T-cell (primary cell): ENCODE measurements at regions of chr6 and their contacts with region 1.

Region 1: GRCh38 chr6:25490018-25490801 is 161.8 kb upstream of the SCGN start:
- DNase-seq: peak; percentile 27 to 81 (median 56)
- ATAC-seq: peak; percentile 69 to 83 (median 79)
- H3K4me3 ChIP-seq: no peak overlapping the region
- H3K4me3 Mint-ChIP-seq: no peak overlapping the region
- H3K27ac ChIP-seq: no peak overlapping the region
- H3K27ac Mint-ChIP-seq: peak overlapping the region; percentile 47 to 78
- H3K4me1 ChIP-seq: peaks cover 0 to 6% of the 10 kb centered on the region in 2 experiments
- H3K4me1 Mint-ChIP-seq: peaks cover 6 to 9% (median 7%) of the 10 kb centered on the region in 3 donors
- H3K27me3 ChIP-seq: no peaks in the 10 kb centered on the region
- H3K27me3 Mint-ChIP-seq: no peaks in the 10 kb centered on the region

Region 2: DNA sequence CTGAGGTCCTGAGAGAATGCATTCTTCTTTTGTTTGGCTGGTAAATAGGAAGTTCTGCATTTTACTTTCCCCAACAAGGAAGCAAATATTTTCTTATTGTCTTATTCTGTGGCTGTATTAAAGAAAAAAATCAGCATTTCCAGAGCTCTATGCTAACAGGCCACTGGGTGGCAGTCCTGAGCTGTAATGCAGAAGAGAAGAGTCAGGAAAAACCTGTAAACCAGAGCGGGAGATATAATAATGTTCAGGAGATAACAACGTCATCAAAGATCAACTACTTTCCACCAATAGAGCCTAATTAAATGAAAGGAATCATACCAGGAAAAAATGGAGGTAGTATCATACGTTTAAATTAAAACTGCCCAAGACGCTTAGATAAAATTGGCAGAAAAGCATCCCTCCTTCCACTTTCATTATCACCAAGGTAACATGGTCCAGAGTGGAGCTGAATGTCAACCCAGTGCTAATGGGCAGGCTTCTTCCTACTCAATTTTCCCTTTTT is 266.7 kb before region 1 on chr6:
- CTCF ChIA-PET with region 1: interaction called, 9 to 46 read pairs
- POLR2A ChIA-PET with region 1: no interaction called
- DNase-seq: peak in 34 of 35 experiments; percentile 4 to 82 (median 53)
- ATAC-seq: peak; percentile 42 to 71 (median 54)
- H3K4me3 ChIP-seq: peak overlapping the region in 1 of 2 donors; percentile 13
- H3K4me3 Mint-ChIP-seq: peak overlapping the region; percentile 28 to 65 (median 62)
- H3K27ac ChIP-seq: no peak overlapping the region
- H3K27ac Mint-ChIP-seq: no peak overlapping the region
- H3K4me1 ChIP-seq: peaks cover 3% of the 10 kb centered on the region in 2 experiments
- H3K4me1 Mint-ChIP-seq: peaks cover 7 to 12% (median 9%) of the 10 kb centered on the region in 3 donors
- H3K27me3 ChIP-seq: no peaks in the 10 kb centered on the region
- H3K27me3 Mint-ChIP-seq: peaks cover 7 to 11% of the 10 kb centered on the region in 2 donors

Region 3: GRCh38 chr6:25263657-25264056 is 226.6 kb before region 1 on chr6:
- CTCF ChIA-PET with region 1: interaction called, 33 to 112 read pairs
- POLR2A ChIA-PET with region 1: interaction called, 3 to 4 read pairs
- DNase-seq: no peak
- ATAC-seq: no peak
- H3K4me3 ChIP-seq: no peak overlapping the region
- H3K4me3 Mint-ChIP-seq: no peak overlapping the region
- H3K27ac ChIP-seq: no peak overlapping the region
- H3K27ac Mint-ChIP-seq: no peak overlapping the region
- H3K4me1 ChIP-seq: peaks cover 0 to 3% of the 10 kb centered on the region in 2 experiments
- H3K4me1 Mint-ChIP-seq: peaks cover 2 to 6% (median 2%) of the 10 kb centered on the region in 3 donors
- H3K27me3 ChIP-seq: no peaks in the 10 kb centered on the region
- H3K27me3 Mint-ChIP-seq: peaks cover 3 to 7% of the 10 kb centered on the region in 2 donors

Region 4: DNA sequence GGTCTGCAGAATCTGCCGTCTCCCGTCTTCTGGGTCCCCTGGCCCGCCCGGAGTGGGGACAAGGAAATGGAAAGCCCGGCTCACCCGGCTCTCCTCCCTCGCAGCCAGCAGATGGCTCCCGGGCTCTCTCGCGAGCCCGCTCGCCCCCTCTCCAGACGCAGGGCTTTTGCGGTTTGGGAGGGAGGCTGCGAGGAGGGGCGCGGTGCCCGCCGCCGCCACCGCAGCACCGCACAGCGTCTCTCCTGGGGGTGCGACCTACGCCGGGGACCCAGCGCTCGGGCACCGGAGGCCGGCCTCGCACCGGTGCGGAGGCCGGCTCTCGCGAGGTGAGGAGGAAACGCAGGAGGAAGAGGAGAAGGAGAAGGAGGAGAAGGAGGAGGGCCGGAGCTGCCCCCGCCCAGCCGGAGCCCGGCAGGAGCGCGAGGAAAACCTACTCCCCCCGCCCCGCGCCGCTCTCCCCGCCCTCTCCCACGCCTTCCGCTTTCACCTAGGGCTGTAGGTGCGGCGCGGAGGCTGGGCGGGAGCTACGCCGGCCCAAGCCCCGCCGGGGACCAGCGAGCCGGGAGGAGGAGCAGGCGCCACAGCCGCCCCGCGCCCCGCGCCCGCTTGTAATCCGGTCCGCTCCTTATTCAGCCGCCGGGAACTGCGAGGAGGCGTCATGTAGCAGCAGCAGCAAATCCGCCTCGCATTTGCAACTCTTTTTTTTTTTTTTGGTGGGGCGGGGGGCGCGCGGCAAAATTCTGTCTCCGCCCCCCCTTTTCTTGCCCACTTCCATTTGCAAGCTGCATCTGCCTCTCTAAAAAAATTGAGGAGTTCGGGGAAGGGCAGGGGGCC is 211.1 kb before region 1 on chr6 and contains the start of gene CARMIL1:
- CTCF ChIA-PET with region 1: interaction called, 9 to 38 read pairs
- POLR2A ChIA-PET with region 1: no interaction called
- DNase-seq: peak; percentile 17 to 80 (median 52)
- ATAC-seq: peak; percentile 75 to 82 (median 78)
- H3K4me3 ChIP-seq: peak within 1 kb of the TSS; percentile 67 to 88
- H3K4me3 Mint-ChIP-seq: peak within 1 kb of the TSS; percentile 85 to 90 (median 88)
- H3K27ac ChIP-seq: peak within 1 kb of the TSS; percentile 0
- H3K27ac Mint-ChIP-seq: peak within 1 kb of the TSS; percentile 68 to 75
- H3K4me1 ChIP-seq: peaks cover 14 to 22% of the 10 kb centered on the region in 2 experiments
- H3K4me1 Mint-ChIP-seq: peaks cover 30 to 35% (median 30%) of the 10 kb centered on the region in 3 donors
- H3K27me3 ChIP-seq: peaks cover 0 to 5% of the 10 kb centered on the region in 2 experiments
- H3K27me3 Mint-ChIP-seq: peaks cover 0 to 6% of the 10 kb centered on the region in 2 donors
- total RNA-seq, gene CARMIL1: 4.0 to 11.6 (median 6.1) TPM

Region 5: GRCh38 chr6:25617997-25618396 is 127.8 kb after region 1 on chr6:
- CTCF ChIA-PET with region 1: no interaction called
- POLR2A ChIA-PET with region 1: no interaction called
- DNase-seq: no peak
- ATAC-seq: no peak
- H3K4me3 ChIP-seq: no peak overlapping the region
- H3K4me3 Mint-ChIP-seq: no peak overlapping the region
- H3K27ac ChIP-seq: no peak overlapping the region
- H3K27ac Mint-ChIP-seq: no peak overlapping the region
- H3K4me1 ChIP-seq: no peaks in the 10 kb centered on the region
- H3K4me1 Mint-ChIP-seq: no peaks in the 10 kb centered on the region
- H3K27me3 ChIP-seq: no peaks in the 10 kb centered on the region
- H3K27me3 Mint-ChIP-seq: no peaks in the 10 kb centered on the region

Region 6: GRCh38 chr6:25735261-25735660 is 245.1 kb after region 1 on chr6:
- CTCF ChIA-PET with region 1: interaction called in 1 of 2 experiments, 11 read pairs
- POLR2A ChIA-PET with region 1: no interaction called
- DNase-seq: no peak
- ATAC-seq: no peak
- H3K4me3 ChIP-seq: no peak overlapping the region
- H3K4me3 Mint-ChIP-seq: no peak overlapping the region
- H3K27ac ChIP-seq: no peak overlapping the region
- H3K27ac Mint-ChIP-seq: no peak overlapping the region
- H3K4me1 ChIP-seq: no peaks in the 10 kb centered on the region
- H3K4me1 Mint-ChIP-seq: no peaks in the 10 kb centered on the region
- H3K27me3 ChIP-seq: peaks cover 2 to 13% of the 10 kb centered on the region in 2 experiments
- H3K27me3 Mint-ChIP-seq: peaks cover 53 to 65% of the 10 kb centered on the region in 2 donors